Activated naive CD4-positive, alpha-beta T cell treated with anti-CD3 and anti-CD28 coated beads, Interleukin-2, amount 10 ng/mL, durations not matched to agents 7 days and 5 days (primary cell): ENCODE measurements at regions of chr19 and their contacts with region 1.

Region 1: GRCh38 chr19:8252922-8253589 is 43.9 kb downstream of the CERS4 start:
- DNase-seq: peak; percentile 90
- H3K4me3 Mint-ChIP-seq: no peak overlapping the region
- H3K27ac Mint-ChIP-seq: no peak overlapping the region
- H3K4me1 Mint-ChIP-seq: peaks cover 18% of the 10 kb centered on the region
- H3K27me3 Mint-ChIP-seq: no peaks in the 10 kb centered on the region

Region 2: DNA sequence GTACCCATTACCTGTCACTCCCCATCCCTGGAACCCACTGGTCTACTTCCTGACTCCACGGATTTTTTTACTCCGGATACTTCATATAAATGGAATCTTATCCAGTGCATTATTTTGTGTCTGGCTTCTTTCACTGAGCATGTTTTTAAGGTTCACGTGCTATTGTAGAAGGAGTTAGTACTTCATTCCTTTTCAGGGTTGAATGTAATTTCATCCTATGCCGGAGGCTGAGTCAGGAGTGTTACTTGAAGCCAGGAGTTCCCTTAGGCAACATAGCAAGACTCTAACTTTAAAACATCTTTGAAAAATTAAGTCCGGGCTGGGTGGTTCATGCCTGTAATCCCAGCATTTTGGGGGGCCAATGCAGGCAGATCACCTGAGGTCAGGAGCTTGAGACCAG is 229.7 kb before region 1 on chr19:
- CTCF ChIA-PET with region 1: no interaction called
- DNase-seq: no peak
- H3K4me3 Mint-ChIP-seq: no peak overlapping the region
- H3K27ac Mint-ChIP-seq: no peak overlapping the region
- H3K4me1 Mint-ChIP-seq: no peaks in the 10 kb centered on the region
- H3K27me3 Mint-ChIP-seq: no peaks in the 10 kb centered on the region

Region 3: GRCh38 chr19:8158411-8159074 is 94.5 kb before region 1 on chr19:
- CTCF ChIA-PET with region 1: interaction called, 16 read pairs
- DNase-seq: peak; percentile 59
- H3K4me3 Mint-ChIP-seq: no peak overlapping the region
- H3K27ac Mint-ChIP-seq: no peak overlapping the region
- H3K4me1 Mint-ChIP-seq: peaks cover 9% of the 10 kb centered on the region
- H3K27me3 Mint-ChIP-seq: peaks cover 40% of the 10 kb centered on the region